AG04449 (cell line): ENCODE measurements at regions of chr3 and their contacts with region 1.

Region 1: GRCh38 chr3:196198771-196199753 is 12.1 kb downstream of the ZDHHC19 start:
- DNase-seq: no peak
- H3K4me3 ChIP-seq: no peak overlapping the region
- CTCF ChIP-seq: peak; percentile 11

Region 2: GRCh38 chr3:196081791-196082618 is 117.1 kb before region 1 on chr3 and contains the start of gene TFRC:
- CTCF ChIA-PET with region 1: interaction called, 298 read pairs
- POLR2A ChIA-PET with region 1: no interaction called
- DNase-seq: no peak
- H3K4me3 ChIP-seq: peak within 1 kb of the TSS; percentile 92
- CTCF ChIP-seq: no peak

Region 3: GRCh38 chr3:196186651-196187573 is 12.2 kb before region 1 on chr3:
- CTCF ChIA-PET with region 1: interaction called, 28 read pairs
- POLR2A ChIA-PET with region 1: no interaction called
- DNase-seq: no peak
- H3K4me3 ChIP-seq: no peak overlapping the region
- CTCF ChIP-seq: no peak